ENCODE measurements at regions of chr3 and their contacts with region 1.

Region 1: GRCh38 chr3:4493014-4493940 is at the start of gene ITPR1:
- DNase-seq: peak; percentile 98
- H3K4me3 Mint-ChIP-seq: peak within 1 kb of the TSS; percentile 85
- H3K27ac Mint-ChIP-seq: peak within 1 kb of the TSS; percentile 64
- H3K4me1 Mint-ChIP-seq: peaks cover 6% of the 10 kb centered on the region
- H3K27me3 Mint-ChIP-seq: no peaks in the 10 kb centered on the region
- CTCF ChIP-seq: no peak
- total RNA-seq, gene ITPR1: 7.5 and 14.3 TPM in 2 replicates

Region 2: DNA sequence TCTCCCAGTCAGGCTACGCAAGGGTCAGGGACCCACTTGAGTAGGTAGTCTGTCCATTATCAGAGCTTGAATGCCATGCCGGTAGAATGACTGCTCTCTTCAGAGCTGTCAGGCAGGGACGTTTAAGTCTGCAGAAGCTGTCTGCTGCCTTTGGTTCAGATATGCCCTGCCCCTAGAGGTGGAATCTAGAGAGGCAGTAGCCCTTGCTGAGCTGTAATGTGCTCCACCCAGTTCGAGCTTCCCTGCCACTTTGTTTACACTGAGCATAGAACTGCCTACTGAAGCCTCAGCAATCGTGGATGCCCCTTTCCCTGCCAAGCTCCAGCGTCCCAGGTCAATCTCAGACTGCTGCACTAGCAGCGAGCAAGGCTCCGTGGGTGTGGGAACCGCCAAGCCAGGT is 247.6 kb before region 1 on chr3:
- CTCF ChIA-PET with region 1: no interaction called
- POLR2A ChIA-PET with region 1: no interaction called
- intact Hi-C with region 1: no loop called
- DNase-seq: no peak
- H3K4me3 Mint-ChIP-seq: no peak overlapping the region
- H3K27ac Mint-ChIP-seq: no peak overlapping the region
- H3K4me1 Mint-ChIP-seq: no peaks in the 10 kb centered on the region
- H3K27me3 Mint-ChIP-seq: no peaks in the 10 kb centered on the region
- CTCF ChIP-seq: no peak

Region 3: GRCh38 chr3:4416961-4417360 is 76.3 kb before region 1 on chr3:
- CTCF ChIA-PET with region 1: no interaction called
- POLR2A ChIA-PET with region 1: interaction called, 16 read pairs
- intact Hi-C with region 1: loop called (anchors 2 kb)
- DNase-seq: peak; percentile 100
- H3K4me3 Mint-ChIP-seq: no peak overlapping the region
- H3K27ac Mint-ChIP-seq: peak overlapping the region; percentile 44
- H3K4me1 Mint-ChIP-seq: peaks cover 14% of the 10 kb centered on the region
- H3K27me3 Mint-ChIP-seq: no peaks in the 10 kb centered on the region
- CTCF ChIP-seq: no peak

Region 4: GRCh38 chr3:4474683-4475490 is 18.4 kb before region 1 on chr3:
- CTCF ChIA-PET with region 1: interaction called, 4 read pairs
- POLR2A ChIA-PET with region 1: interaction called, 14 read pairs
- intact Hi-C with region 1: no loop called
- DNase-seq: peak; percentile 93
- H3K4me3 Mint-ChIP-seq: no peak overlapping the region
- H3K27ac Mint-ChIP-seq: no peak overlapping the region
- H3K4me1 Mint-ChIP-seq: peaks cover 12% of the 10 kb centered on the region
- H3K27me3 Mint-ChIP-seq: peaks cover 19% of the 10 kb centered on the region
- CTCF ChIP-seq: no peak

Region 5: GRCh38 chr3:4524088-4525023 is 31.1 kb after region 1 on chr3:
- CTCF ChIA-PET with region 1: interaction called, 4 read pairs
- POLR2A ChIA-PET with region 1: interaction called, 14 read pairs
- intact Hi-C with region 1: no loop called
- DNase-seq: peak; percentile 82
- H3K4me3 Mint-ChIP-seq: no peak overlapping the region
- H3K27ac Mint-ChIP-seq: no peak overlapping the region
- H3K4me1 Mint-ChIP-seq: no peaks in the 10 kb centered on the region
- H3K27me3 Mint-ChIP-seq: no peaks in the 10 kb centered on the region
- CTCF ChIP-seq: no peak